Activated naive CD4-positive, alpha-beta T cell treated with anti-CD3 and anti-CD28 coated beads, Interleukin-2, amount 10 ng/mL, durations not matched to agents 7 days and 5 days (primary cell): ENCODE measurements at regions of chr20 and their contacts with region 1.

Region 1: DNA sequence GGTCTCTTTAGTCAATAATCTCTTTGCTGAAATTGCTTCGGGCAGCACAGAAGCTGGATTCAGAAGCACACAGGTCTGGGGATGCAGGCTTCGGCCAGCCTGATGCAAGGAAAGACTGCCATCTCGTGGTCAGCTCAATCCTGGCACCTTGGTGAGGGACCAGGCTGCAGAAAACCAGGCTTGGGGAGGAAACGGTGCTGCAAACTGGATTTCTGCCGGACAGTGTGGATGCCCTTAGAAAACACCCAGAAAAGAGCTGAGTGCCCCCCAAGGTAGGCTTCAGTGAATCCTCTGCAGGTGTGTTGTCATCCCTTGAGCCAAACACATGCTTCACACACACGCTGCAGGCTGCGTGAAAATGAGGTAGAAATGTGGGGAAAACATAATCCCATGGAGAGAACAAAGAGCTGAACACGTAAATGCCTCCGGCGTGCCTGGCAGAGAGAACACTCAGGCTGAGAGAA is 89.8 kb upstream of the PAX1 start:
- DNase-seq: peak; percentile 61
- H3K4me3 Mint-ChIP-seq: no peak overlapping the region
- H3K27ac Mint-ChIP-seq: no peak overlapping the region
- H3K4me1 Mint-ChIP-seq: no peaks in the 10 kb centered on the region
- H3K27me3 Mint-ChIP-seq: peaks cover 18% of the 10 kb centered on the region

Region 2: DNA sequence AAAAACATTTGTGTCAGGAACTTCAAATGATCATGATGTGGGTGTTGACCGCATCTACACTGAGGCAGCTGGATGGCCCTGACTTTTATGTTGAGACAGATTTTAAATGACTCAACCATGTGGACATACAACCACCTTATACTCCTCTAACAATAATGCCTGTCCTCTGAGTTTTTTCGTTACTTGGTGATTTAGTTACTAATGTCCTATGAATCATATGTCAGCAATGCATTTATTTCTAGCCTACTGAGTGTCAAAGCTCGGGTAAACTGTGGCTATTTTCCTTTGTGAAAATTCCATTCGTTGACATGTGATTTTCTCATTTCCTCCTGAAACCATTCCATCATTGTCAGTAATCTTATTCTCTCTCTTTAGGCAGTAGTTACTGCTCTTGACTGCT is 179.4 kb before region 1 on chr20:
- CTCF ChIA-PET with region 1: no interaction called
- DNase-seq: no peak
- H3K4me3 Mint-ChIP-seq: no peak overlapping the region
- H3K27ac Mint-ChIP-seq: no peak overlapping the region
- H3K4me1 Mint-ChIP-seq: no peaks in the 10 kb centered on the region
- H3K27me3 Mint-ChIP-seq: peaks cover 27% of the 10 kb centered on the region

Region 3: GRCh38 chr20:21529863-21530262 is 85.8 kb before region 1 on chr20:
- CTCF ChIA-PET with region 1: interaction called, 19 read pairs
- DNase-seq: no peak
- H3K4me3 Mint-ChIP-seq: no peak overlapping the region
- H3K27ac Mint-ChIP-seq: no peak overlapping the region
- H3K4me1 Mint-ChIP-seq: no peaks in the 10 kb centered on the region
- H3K27me3 Mint-ChIP-seq: peaks cover 35% of the 10 kb centered on the region